ENCODE measurements at regions of chr17 and their contacts with region 1.

Region 1: GRCh38 chr17:44864866-44865660 is 17.4 kb downstream of the HIGD1B start:
- DNase-seq: peak; percentile 58
- H3K4me3 ChIP-seq: no peak overlapping the region
- H3K27ac ChIP-seq: no peak overlapping the region
- H3K27me3 ChIP-seq: no peaks in the 10 kb centered on the region
- CTCF ChIP-seq: peak; percentile 88

Region 2: GRCh38 chr17:44775136-44775837 is 89.8 kb before region 1 on chr17:
- CTCF ChIA-PET with region 1: interaction called, 136 read pairs
- POLR2A ChIA-PET with region 1: no interaction called
- DNase-seq: peak; percentile 93
- H3K4me3 ChIP-seq: peak overlapping the region; percentile 76
- H3K27ac ChIP-seq: peak overlapping the region; percentile 31
- H3K27me3 ChIP-seq: peaks cover 18% of the 10 kb centered on the region
- CTCF ChIP-seq: no peak

Region 3: DNA sequence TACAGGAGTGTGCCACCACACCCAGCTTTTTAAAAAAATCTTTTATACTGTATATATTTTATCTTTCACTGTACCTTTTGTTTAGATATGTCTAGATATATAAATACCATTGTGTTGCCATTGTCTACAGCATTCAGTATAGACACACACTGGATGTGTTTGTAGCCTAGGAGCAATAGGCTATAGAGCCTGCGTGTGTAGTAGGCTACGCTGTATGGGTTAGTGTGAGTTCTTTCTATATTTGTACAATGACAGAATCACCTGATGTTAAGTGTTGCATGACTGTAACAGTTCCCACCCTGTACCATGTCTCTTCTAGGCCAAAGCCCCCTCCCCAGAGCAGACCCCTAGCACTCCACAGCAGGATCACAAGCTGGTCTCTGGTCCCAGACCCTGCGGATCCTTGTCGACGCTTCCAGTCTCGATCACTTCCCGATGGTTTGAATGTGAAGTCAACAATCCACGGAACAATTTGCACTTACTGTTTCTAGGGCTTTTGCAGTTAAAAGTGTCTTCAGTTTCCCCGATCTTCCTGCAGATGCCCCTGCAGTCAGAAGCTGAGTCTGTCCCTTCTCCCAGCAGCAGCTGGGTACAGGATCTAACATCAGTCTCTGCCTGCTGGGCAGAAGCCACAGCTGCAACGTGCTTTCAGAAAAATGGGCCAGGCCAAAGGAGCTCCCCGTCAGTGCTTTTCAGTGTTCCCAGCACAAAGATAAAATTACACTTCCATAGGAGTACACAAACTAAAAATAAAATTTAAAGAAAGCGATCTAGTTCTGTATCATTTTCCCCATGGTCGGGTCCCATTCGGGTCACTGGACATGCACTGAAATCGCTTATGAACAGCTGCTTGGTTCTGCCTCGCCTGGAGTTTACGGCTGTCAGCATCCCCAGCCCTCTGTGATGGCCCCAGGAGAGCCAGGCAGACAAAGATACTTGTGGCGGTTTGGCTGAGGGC is 70.9 kb before region 1 on chr17:
- CTCF ChIA-PET with region 1: interaction called, 5 read pairs
- POLR2A ChIA-PET with region 1: interaction called, 11 read pairs
- DNase-seq: no peak
- H3K4me3 ChIP-seq: no peak overlapping the region
- H3K27ac ChIP-seq: peak overlapping the region; percentile 96
- H3K27me3 ChIP-seq: no peaks in the 10 kb centered on the region
- CTCF ChIP-seq: no peak

Region 4: DNA sequence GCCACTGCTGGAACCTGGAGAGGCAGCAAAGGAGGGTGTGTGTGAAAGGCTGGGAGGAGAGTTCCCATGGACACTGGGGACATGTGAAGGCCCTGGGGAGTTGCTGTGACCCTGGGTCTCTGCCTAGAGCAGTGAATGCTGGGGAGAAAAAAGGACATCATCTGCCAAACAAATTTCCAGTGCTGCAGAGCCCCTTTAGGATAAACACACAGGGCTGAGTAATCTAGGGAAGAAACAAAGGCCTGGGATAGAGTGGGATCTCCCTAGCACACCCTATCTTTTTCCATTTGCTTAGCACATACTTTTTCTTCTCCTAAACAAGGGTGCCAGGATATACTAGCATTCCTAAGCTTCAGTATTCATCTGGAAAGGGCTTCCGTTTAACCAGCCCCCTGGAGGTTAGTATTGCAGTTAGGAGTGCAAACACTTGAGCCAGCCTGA is 20.7 kb before region 1 on chr17:
- CTCF ChIA-PET with region 1: interaction called, 10 read pairs
- POLR2A ChIA-PET with region 1: interaction called, 5 read pairs
- DNase-seq: no peak
- H3K4me3 ChIP-seq: no peak overlapping the region
- H3K27ac ChIP-seq: peak overlapping the region; percentile 68
- H3K27me3 ChIP-seq: no peaks in the 10 kb centered on the region
- CTCF ChIP-seq: peak; percentile 36

Region 5: DNA sequence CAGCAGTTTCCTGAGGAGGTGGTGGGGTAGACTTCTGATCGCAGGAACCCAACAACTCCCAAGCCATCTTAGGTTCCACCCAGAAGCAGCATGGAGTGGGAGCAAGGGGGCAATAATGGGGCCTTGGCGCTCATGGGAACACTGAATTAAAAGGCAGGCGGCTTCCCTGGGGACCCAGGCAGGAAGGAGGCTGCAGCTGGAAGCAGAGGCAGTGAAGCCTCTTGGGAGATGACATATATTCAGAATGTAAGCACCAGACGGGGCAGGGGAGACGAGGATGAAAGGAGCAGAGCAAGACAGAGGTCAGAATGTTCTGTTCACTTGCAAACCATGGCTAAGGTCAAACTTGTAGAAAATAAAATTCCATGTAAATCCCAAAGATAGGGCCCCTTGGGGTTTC is 14.5 kb before region 1 on chr17:
- CTCF ChIA-PET with region 1: interaction called, 20 read pairs
- POLR2A ChIA-PET with region 1: no interaction called
- DNase-seq: no peak
- H3K4me3 ChIP-seq: no peak overlapping the region
- H3K27ac ChIP-seq: no peak overlapping the region
- H3K27me3 ChIP-seq: no peaks in the 10 kb centered on the region
- CTCF ChIP-seq: no peak

Region 6: DNA sequence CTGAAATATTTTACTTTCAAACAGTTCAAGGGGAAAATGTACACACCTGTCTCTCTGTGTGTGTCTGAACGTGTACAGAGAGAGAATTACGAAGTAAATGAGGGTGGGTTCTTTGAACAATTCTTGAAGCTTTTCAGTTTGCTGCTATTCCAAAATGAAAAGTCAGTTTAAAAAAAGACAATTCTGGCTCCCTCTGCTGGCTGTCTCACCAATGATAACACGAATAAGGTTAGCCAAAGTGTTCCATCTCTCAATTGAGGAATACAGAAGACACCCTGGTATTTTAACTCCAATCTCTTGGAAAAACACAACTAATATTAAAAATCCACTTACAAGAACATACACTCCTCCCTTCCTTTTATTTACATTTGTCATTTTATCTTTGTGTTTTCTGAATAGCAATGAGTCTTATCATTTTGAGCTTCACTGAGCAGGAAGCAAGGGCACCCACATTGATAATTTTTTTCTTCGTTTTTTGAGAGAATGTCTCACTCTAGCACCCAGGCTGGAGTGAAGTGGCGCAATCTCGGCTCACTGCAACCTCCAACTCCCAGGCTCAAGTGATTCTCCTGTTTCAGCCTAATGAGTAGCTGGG is 13.7 kb after region 1 on chr17:
- CTCF ChIA-PET with region 1: interaction called, 62 read pairs
- POLR2A ChIA-PET with region 1: no interaction called
- DNase-seq: no peak
- H3K4me3 ChIP-seq: no peak overlapping the region
- H3K27ac ChIP-seq: no peak overlapping the region
- H3K27me3 ChIP-seq: no peaks in the 10 kb centered on the region
- CTCF ChIP-seq: peak; percentile 70